ENCODE measurements at regions of chr11 and their contacts with region 1.

Region 1: GRCh38 chr11:128157423-128158298 is 429.7 kb downstream of the ETS1 start:
- DNase-seq: no peak
- ATAC-seq: peak; percentile 68 to 86
- H3K4me3 ChIP-seq: peak overlapping the region in 1 of 4 donors; percentile 14
- H3K27ac ChIP-seq: no peak overlapping the region
- H3K4me1 ChIP-seq: no peaks in the 10 kb centered on the region
- H3K27me3 ChIP-seq: no peaks in the 10 kb centered on the region
- CTCF ChIP-seq: peak; percentile 63 to 78 (median 73)
- POLR2A ChIP-seq: no peak

Region 2: DNA sequence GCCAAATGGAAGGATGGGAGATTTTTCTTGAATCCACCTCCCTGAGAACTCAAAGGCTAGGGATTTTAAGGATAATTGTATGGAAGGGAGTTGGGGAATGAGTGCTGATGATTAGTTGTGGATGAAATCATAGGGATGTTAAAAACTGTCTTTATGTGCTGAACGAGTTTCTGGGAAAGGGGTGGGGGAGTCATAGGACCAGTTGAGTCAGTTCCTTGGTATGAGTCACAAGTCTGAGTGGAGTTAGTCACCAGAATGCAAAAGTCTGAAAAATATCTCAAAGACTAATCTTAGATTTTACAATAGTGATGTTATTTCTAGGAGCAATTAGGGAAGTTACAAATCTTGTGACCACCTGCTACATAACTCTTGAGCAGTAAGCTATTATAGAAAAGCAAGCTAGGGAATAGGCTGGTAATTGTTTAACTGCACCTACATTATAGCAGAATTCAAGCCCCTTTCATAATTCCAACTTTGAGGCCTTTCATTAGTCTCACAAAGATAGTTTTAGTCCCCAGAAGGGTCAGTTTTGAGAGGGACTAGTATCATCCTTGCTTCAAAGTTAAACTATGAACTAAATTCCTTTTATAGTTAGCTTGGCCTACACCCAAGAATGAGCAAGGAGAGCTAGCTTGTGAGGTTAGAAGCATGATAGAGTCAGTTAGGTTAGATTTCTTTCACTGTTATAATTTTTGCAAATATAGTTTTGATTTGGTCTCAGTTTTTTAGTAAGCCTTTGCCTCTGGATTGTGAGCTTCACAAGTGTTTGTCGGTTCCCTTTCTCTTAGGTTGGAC is 238.3 kb before region 1 on chr11:
- in situ Hi-C with region 1: no loop called
- intact Hi-C with region 1: no loop called
- DNase-seq: no peak
- ATAC-seq: no peak
- H3K4me3 ChIP-seq: no peak overlapping the region
- H3K27ac ChIP-seq: no peak overlapping the region
- H3K4me1 ChIP-seq: no peaks in the 10 kb centered on the region
- H3K27me3 ChIP-seq: no peaks in the 10 kb centered on the region
- CTCF ChIP-seq: no peak
- POLR2A ChIP-seq: no peak

Region 3: DNA sequence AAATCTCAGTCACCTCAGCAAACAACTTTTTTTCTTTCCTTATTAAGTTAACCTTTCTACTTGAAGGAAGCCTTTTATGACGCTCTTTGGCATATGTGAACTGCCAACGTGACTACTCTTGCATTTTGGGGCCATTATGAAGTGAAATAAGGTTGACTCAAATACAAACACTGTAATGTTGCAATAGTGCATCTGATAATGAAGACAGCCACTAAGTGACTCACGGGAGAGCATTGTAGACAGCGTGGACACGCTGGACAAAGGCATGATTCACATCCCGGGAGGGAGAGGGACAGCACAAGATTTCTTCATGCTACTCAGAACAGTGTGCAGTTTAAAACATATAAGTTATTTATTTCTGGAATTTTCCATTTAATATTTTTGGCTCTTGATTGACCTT is 131.1 kb before region 1 on chr11:
- in situ Hi-C with region 1: no loop called
- intact Hi-C with region 1: loop called (anchors 2 kb)
- DNase-seq: no peak
- ATAC-seq: no peak
- H3K4me3 ChIP-seq: no peak overlapping the region
- H3K27ac ChIP-seq: no peak overlapping the region
- H3K4me1 ChIP-seq: no peaks in the 10 kb centered on the region
- H3K27me3 ChIP-seq: no peaks in the 10 kb centered on the region
- CTCF ChIP-seq: no peak
- POLR2A ChIP-seq: no peak

Region 4: DNA sequence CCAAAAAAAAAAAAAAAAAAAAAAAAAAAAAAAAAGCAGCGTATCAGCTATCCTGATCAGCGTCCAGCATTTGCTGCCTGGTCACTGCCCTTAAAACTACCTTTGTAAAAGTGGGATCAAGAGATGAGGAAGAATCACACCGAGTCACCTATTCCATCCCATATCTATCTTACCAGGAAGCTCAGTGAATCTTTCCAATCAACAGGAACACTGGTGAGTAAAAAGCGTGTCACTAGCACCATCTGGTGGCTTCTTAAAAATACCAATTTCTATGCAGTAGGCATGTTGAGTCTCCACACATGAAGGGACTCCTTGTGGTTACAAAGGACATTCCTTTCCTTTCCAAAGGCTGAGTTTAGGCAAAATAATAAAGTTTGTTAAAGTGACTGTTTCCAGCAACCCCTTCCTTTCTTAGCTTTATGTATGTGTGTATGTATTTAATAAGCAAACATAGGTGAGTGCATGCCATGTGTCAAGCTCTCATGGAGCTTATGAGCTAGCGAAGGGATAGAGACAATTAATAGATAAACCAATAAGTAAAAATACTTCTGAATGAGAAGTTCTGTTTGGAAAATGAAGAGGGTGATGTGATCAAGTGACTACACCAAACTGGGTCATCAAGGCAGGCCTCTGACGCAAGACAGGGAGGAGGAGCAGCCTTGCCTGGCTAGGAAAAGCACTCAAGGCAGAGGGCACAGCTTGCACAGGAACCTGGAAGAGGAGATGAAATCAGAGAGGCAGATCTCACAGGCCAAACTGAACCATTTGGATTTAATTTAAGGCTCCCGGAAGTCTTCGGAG is 798.9 kb after region 1 on chr11:
- in situ Hi-C with region 1: loop called in 1 of 4 experiments (anchors 25 kb)
- intact Hi-C with region 1: no loop called
- DNase-seq: no peak
- ATAC-seq: peak; percentile 45 to 49
- H3K4me3 ChIP-seq: no peak overlapping the region
- H3K27ac ChIP-seq: no peak overlapping the region
- H3K4me1 ChIP-seq: no peaks in the 10 kb centered on the region
- H3K27me3 ChIP-seq: no peaks in the 10 kb centered on the region
- CTCF ChIP-seq: peak; percentile 44 to 65 (median 62)
- POLR2A ChIP-seq: no peak